Right cardiac atrium (tissue), 5 donors: ENCODE measurements at regions of chr14 and their contacts with region 1.

Region 1: DNA sequence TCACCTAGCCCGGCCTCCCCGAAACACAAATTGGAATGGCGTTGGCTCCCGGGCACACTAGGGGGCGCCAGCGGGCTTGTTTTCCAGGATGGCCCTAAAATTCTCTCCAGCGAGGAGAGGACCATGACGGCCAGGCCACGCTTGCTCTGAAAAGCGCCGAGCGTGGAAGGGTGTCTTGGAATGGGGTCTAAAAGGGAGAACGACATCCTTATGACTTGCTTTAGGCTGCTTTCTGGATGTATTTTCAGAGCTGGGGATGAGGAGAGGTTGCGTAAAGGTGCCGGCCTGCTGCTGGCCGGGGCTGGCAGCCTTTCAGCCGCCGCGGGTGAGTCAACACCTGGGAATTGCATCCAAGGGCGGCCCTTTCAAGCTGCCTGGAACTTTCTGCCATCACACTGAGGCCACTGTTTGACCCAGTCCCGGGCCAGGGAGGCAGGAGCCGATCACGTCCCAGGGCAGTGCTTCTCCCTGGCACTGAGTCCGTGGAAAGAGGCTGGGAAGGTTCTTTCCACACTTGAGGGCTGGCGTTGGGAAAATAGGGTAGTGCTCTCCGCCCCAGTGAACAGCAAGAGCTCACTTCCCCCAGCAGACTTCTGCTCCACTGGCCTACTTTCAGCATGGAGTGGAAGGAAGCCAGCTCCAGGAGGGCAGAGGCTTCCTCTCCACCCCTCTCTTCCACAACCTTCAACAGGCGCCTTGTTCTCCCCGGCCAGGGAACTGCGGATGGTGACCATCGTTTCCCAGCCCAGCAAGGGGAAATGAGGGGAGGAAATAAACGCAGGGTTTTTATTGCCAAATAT is 216.2 kb downstream of the TTC8 start:
- DNase-seq: peak; percentile 91 to 95 (median 94)
- ATAC-seq: peak; percentile 94 to 97
- H3K4me3 ChIP-seq: peak overlapping the region; percentile 23
- H3K27ac ChIP-seq: peak overlapping the region; percentile 79
- H3K4me1 ChIP-seq: peaks cover 6% of the 10 kb centered on the region
- H3K27me3 ChIP-seq: no peaks in the 10 kb centered on the region

Region 2: GRCh38 chr14:88463318-88463717 is 577.3 kb before region 1 on chr14:
- intact Hi-C with region 1: no loop called
- DNase-seq: no peak
- ATAC-seq: no peak
- H3K4me3 ChIP-seq: no peak overlapping the region
- H3K27ac ChIP-seq: no peak overlapping the region
- H3K4me1 ChIP-seq: no peaks in the 10 kb centered on the region
- H3K27me3 ChIP-seq: no peaks in the 10 kb centered on the region

Region 3: DNA sequence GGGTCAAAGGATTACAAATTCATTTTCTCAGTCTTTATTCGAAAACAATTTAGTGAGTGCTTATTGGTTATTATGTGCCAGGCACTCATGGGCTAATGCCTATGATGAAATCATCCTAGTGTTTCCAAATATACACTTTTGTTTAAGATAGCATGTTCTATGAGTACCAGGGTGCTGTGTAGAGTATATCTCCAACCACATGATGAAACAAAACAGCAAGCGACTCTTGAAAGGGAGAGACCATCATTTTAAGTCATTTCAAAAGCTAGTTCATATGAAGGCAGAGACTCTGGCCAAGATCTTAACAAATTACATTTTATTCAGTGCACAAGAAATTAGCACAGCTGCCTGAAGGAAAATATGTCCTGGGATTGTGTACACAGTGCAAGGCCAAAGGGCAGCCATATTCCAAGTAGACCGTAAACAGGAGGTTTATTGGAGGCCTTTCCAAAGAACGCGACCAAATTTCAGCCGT is 709.7 kb after region 1 on chr14:
- intact Hi-C with region 1: loop called in 1 of 4 experiments (anchors 10 kb)
- DNase-seq: no peak
- ATAC-seq: peak in 1 of 2 donors; percentile 78
- H3K4me3 ChIP-seq: no peak overlapping the region
- H3K27ac ChIP-seq: no peak overlapping the region
- H3K4me1 ChIP-seq: no peaks in the 10 kb centered on the region
- H3K27me3 ChIP-seq: no peaks in the 10 kb centered on the region